ENCODE measurements at regions of chr15 and their contacts with region 1.

Region 1: DNA sequence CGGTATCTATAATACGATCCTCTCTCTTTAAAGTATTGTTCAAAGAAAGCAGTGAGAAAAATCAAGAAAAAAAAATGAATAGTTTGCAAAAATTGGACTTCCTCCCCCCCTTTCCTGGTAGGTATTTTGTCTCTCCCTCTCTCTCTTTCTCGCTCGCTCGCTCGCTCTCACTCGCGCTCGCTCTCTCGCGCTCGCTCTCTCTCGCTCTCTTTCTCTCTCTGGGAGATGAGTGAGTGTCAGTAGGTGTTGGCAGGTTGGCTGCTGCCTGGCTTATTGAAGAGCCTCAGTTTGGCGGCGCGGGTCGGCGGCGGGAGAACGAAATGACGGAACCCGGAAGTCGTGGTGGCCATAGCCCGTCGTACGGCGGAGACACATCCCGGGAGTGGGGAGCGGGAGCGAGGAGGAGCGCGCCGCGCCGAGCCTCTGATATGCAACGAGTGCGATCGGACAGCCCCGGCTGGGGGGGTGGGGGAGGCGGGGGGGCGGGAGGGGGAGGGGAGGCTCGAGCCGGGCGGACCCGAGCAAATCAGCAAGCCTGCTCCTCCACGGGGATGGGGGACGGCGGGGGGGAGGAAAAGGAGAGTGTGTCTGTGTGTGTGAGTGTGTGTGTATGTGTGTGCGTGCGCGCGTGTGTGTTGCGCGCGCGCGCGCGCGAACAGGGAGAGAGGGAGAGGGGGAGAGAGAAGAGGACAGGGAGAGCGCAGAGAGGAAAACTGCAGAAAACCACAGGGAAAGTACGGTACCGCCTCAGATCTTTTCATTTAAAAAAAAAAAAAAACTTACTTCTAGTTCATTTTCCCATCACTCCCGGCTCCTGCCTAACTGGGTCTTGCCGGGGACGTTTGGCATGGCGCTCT is at the start of gene MEIS2:
- DNase-seq: peak; percentile 83
- ATAC-seq: peak; percentile 70
- H3K4me3 ChIP-seq: peak within 1 kb of the TSS; percentile 83 to 92 (median 88)
- H3K27ac ChIP-seq: peak within 1 kb of the TSS; percentile 96
- H3K4me1 ChIP-seq: peaks cover 26% of the 10 kb centered on the region
- H3K27me3 ChIP-seq: no peaks in the 10 kb centered on the region; a peak in 1 of 5 replicates
- CTCF ChIP-seq: no peak
- EP300 ChIP-seq: no peak
- POLR2A ChIP-seq: peak; percentile 21 to 50; a peak in 3 of 4 replicates
- RAD21 ChIP-seq: no peak
- total RNA-seq, gene MEIS2: 12.4 and 12.6 TPM in 2 replicates

Region 2: DNA sequence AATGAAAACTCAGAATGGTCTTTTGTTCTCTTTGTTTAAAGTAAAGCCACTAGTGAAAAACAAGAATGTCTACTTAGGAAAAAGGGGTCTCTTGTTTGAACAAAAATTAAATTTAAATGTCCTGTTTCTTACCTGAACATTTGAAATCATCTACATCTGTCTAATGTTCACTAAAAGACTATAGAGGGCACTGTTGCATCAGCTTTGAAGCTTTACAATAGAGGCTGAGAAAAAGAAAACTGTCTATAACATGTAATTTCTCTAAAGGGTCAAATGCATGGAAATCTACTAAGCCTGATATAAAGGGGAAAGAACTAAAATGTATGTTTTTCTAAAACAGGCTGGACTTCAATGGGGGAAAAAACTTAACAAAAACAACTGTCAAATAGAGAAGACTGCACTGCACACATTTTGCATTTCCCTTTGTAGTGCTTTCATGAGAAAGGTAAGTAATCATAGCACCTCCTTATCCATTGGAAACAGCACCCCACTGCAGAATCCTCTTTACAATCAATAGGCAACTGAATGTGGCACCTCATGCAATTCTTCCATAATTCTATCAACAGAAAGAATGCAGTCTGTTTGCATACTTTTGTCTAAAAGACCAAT is 1580.7 kb before region 1 on chr15:
- CTCF ChIA-PET with region 1: no interaction called
- POLR2A ChIA-PET with region 1: no interaction called
- in situ Hi-C with region 1: no loop called
- intact Hi-C with region 1: loop called (anchors 10 kb)
- DNase-seq: peak; percentile 45
- ATAC-seq: peak; percentile 61
- H3K4me3 ChIP-seq: no peak overlapping the region
- H3K27ac ChIP-seq: no peak overlapping the region
- H3K4me1 ChIP-seq: peaks cover 8% of the 10 kb centered on the region
- H3K27me3 ChIP-seq: no peaks in the 10 kb centered on the region
- CTCF ChIP-seq: peak; percentile 60
- EP300 ChIP-seq: no peak
- POLR2A ChIP-seq: no peak
- RAD21 ChIP-seq: peak; percentile 69; the same call in 1 of the 2 replicates

Region 3: DNA sequence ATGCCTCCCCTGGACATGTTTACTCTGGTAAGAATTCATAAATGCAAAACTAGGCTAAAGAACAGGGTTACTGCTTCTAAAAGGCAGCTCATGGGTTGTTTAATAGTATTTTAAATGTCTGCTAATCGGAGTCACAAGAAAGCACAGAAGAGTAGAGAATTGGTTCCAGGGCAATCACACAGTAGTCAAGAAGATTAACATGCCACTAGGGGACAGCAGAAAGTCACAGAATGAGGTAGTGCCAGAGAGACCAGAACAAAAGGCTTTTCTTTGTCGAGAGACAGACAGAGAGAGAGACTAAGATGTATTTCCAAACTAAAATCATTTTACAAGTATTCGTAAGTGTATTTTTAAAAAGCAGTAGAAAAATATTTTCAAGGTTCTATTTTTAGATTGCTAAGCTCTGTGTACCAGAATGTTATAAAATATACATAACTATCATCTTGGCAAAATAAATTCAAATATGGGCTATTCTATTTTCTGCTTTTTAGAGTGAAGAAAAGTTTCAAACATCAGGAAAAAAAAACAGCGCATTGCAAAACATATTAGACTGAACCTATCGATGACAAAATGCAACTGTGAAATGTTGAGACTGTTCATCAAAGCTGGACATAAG is 599.2 kb before region 1 on chr15:
- CTCF ChIA-PET with region 1: no interaction called
- POLR2A ChIA-PET with region 1: no interaction called
- in situ Hi-C with region 1: loop called (anchors 10 kb)
- intact Hi-C with region 1: no loop called
- DNase-seq: peak; percentile 74
- ATAC-seq: peak; percentile 98
- H3K4me3 ChIP-seq: no peak overlapping the region
- H3K27ac ChIP-seq: no peak overlapping the region
- H3K4me1 ChIP-seq: peaks cover 20% of the 10 kb centered on the region
- H3K27me3 ChIP-seq: peaks cover 0 to 41% of the 10 kb centered on the region in 2 experiments; a peak in 3 of 5 replicates
- CTCF ChIP-seq: peak; percentile 85
- EP300 ChIP-seq: no peak
- POLR2A ChIP-seq: no peak
- RAD21 ChIP-seq: peak; percentile 67; the same call in 1 of the 2 replicates

Region 4: DNA sequence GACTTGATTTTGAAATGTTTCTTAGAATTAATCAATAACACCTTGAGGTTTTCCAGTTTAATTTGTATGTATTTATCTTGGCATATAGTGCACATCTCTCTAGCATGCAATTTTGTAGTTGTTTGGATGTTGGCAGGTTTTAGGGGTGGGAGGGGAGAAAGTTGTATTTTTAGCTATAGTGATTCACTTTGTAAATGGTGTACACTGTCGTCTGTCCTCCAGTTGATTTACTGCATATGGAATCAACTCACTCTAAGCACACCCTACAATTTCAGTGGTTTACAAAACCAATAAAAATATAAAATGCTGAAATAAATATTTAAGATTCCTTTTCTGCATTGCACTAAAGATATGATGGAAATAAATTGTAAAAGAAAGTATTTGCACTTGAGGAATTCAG is 321.8 kb before region 1 on chr15:
- CTCF ChIA-PET with region 1: no interaction called
- POLR2A ChIA-PET with region 1: no interaction called
- in situ Hi-C with region 1: no loop called
- intact Hi-C with region 1: no loop called
- DNase-seq: no peak
- ATAC-seq: no peak
- H3K4me3 ChIP-seq: no peak overlapping the region
- H3K27ac ChIP-seq: no peak overlapping the region
- H3K4me1 ChIP-seq: no peaks in the 10 kb centered on the region
- H3K27me3 ChIP-seq: no peaks in the 10 kb centered on the region
- CTCF ChIP-seq: no peak
- EP300 ChIP-seq: no peak
- POLR2A ChIP-seq: no peak
- RAD21 ChIP-seq: no peak

Region 5: GRCh38 chr15:36977659-36978058 is 122.7 kb before region 1 on chr15:
- CTCF ChIA-PET with region 1: no interaction called
- POLR2A ChIA-PET with region 1: no interaction called
- in situ Hi-C with region 1: no loop called
- intact Hi-C with region 1: loop called (anchors 5 kb)
- DNase-seq: peak; percentile 70
- ATAC-seq: peak; percentile 75
- H3K4me3 ChIP-seq: no peak overlapping the region
- H3K27ac ChIP-seq: no peak overlapping the region
- H3K4me1 ChIP-seq: peaks cover 15% of the 10 kb centered on the region
- H3K27me3 ChIP-seq: no peaks in the 10 kb centered on the region
- CTCF ChIP-seq: no peak
- EP300 ChIP-seq: 0 out of 4 replicates have a peak, but pooled peaks of 1 of the 2 experiments have one; percentile 22
- POLR2A ChIP-seq: no peak
- RAD21 ChIP-seq: no peak

Region 6: DNA sequence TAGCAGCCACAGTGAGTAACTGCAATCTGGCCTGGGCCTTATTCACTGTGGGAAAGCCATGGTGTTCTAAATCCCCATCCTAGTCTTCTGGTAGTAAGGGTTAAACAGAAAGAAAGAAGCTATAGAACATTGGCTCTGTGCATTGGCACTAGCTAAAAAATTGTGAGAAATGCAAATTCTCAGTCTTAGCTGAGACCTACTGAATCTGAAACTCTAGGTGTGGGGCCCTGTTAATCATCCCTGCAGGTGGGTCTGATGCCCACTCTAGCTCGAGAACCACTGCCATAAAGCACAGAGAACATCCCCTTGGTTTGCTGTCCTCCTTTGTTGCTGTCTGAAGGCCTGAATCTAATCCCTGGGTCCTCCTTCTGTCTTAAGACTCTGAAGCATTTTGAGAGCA is 59.3 kb before region 1 on chr15:
- CTCF ChIA-PET with region 1: no interaction called
- POLR2A ChIA-PET with region 1: interaction called, 5 read pairs
- in situ Hi-C with region 1: loop called (anchors 10 kb)
- intact Hi-C with region 1: loop called (anchors 2 kb)
- DNase-seq: no peak
- ATAC-seq: no peak
- H3K4me3 ChIP-seq: no peak overlapping the region
- H3K27ac ChIP-seq: peak overlapping the region; percentile 68
- H3K4me1 ChIP-seq: peaks cover 45% of the 10 kb centered on the region
- H3K27me3 ChIP-seq: no peaks in the 10 kb centered on the region
- CTCF ChIP-seq: no peak
- EP300 ChIP-seq: no peak
- POLR2A ChIP-seq: no peak
- RAD21 ChIP-seq: no peak

Region 7: DNA sequence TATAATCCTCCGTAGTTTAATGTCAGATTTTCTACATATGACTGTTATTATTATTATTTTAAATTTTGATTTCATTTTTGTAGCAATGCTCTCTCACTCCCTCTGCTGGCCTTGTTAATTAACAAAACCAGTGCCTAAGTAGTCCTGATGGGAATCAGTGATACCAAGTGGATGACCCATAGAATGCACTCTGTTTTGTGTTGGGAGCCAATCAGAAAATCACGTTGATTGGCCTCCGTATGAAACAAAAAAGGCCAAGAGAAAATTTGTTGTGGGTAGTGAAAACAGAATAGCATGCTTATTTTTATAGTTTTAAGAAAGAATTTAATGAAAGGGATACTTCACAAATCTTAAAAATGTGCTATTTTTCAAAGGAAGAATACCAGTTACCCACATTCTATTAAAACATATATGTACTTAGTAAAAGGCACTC is 34.4 kb after region 1 on chr15:
- CTCF ChIA-PET with region 1: no interaction called
- POLR2A ChIA-PET with region 1: no interaction called
- in situ Hi-C with region 1: no loop called
- intact Hi-C with region 1: loop called (anchors 1 kb)
- DNase-seq: peak; percentile 34
- ATAC-seq: peak; percentile 84
- H3K4me3 ChIP-seq: no peak overlapping the region
- H3K27ac ChIP-seq: no peak overlapping the region
- H3K4me1 ChIP-seq: no peaks in the 10 kb centered on the region
- H3K27me3 ChIP-seq: no peaks in the 10 kb centered on the region
- CTCF ChIP-seq: peak; percentile 49
- EP300 ChIP-seq: no peak
- POLR2A ChIP-seq: no peak
- RAD21 ChIP-seq: no peak

Measured in HepG2 (cell line).